MCF 10A (cell line): ENCODE measurements at regions of chr10 and their contacts with region 1.

Region 1: GRCh38 chr10:93288654-93289634 is 193.2 kb downstream of the MYOF start:
- DNase-seq: peak; percentile 86
- H3K4me3 Mint-ChIP-seq: no peak overlapping the region
- H3K27ac Mint-ChIP-seq: peak overlapping the region; percentile 40
- H3K4me1 Mint-ChIP-seq: peaks cover 5% of the 10 kb centered on the region
- H3K27me3 Mint-ChIP-seq: no peaks in the 10 kb centered on the region
- CTCF ChIP-seq: peak; percentile 77

Region 2: GRCh38 chr10:92965314-92965713 is 323.6 kb before region 1 on chr10:
- CTCF ChIA-PET with region 1: interaction called, 3 read pairs
- POLR2A ChIA-PET with region 1: no interaction called
- intact Hi-C with region 1: loop called (anchors 1 kb)
- DNase-seq: peak; percentile 53
- H3K4me3 Mint-ChIP-seq: no peak overlapping the region
- H3K27ac Mint-ChIP-seq: peak overlapping the region; percentile 9
- H3K4me1 Mint-ChIP-seq: no peaks in the 10 kb centered on the region
- H3K27me3 Mint-ChIP-seq: no peaks in the 10 kb centered on the region
- CTCF ChIP-seq: peak; percentile 57

Region 3: GRCh38 chr10:93080350-93081046 is 208.4 kb before region 1 on chr10:
- CTCF ChIA-PET with region 1: interaction called, 41 read pairs
- POLR2A ChIA-PET with region 1: no interaction called
- intact Hi-C with region 1: loop called (anchors 1 kb)
- DNase-seq: peak; percentile 57
- H3K4me3 Mint-ChIP-seq: peak overlapping the region; percentile 29
- H3K27ac Mint-ChIP-seq: peak overlapping the region; percentile 72
- H3K4me1 Mint-ChIP-seq: peaks cover 5% of the 10 kb centered on the region
- H3K27me3 Mint-ChIP-seq: peaks cover 17% of the 10 kb centered on the region
- CTCF ChIP-seq: peak; percentile 86

Region 4: DNA sequence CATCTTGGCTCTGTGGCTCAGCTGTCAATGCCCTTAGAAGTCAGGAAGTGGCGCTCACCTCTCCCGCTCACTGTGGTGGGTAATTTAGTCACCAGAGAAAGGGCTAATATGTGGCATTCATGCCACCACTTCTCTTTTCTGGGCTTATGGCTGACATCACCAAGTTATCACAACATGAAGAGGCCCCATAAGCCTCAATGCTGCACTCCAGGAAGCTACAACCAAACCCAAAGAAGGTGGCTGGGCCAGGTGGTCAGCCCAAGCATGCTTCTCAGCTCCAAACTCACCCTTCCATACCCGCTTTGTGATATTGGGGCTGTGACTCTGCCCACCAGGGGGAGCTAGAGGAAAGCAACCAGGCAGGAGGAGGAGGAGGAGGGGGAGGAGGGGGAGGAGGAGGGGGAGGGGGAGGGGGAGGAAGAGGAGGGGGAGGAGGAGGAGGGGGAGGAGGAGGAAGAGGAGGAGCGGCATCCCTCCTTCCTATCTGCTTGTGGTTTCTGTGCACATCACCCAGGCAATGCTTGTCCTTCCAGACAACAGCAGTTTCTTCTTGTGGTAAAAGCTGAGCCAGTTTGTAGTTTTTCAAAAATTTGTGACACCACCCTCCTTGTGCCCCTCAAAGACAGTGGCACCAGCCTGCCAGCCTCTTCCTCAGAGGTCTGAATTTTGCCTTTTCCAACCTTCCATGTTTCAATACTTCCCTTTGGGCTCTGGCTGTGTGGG is 173.1 kb before region 1 on chr10:
- CTCF ChIA-PET with region 1: interaction called, 8 read pairs
- POLR2A ChIA-PET with region 1: no interaction called
- intact Hi-C with region 1: loop called (anchors 1 kb)
- DNase-seq: peak; percentile 82
- H3K4me3 Mint-ChIP-seq: no peak overlapping the region
- H3K27ac Mint-ChIP-seq: no peak overlapping the region
- H3K4me1 Mint-ChIP-seq: no peaks in the 10 kb centered on the region
- H3K27me3 Mint-ChIP-seq: no peaks in the 10 kb centered on the region
- CTCF ChIP-seq: peak; percentile 43